Gastrocnemius medialis (tissue), 4 donors: ENCODE measurements at regions of chr1 and their contacts with region 1.

Region 1: DNA sequence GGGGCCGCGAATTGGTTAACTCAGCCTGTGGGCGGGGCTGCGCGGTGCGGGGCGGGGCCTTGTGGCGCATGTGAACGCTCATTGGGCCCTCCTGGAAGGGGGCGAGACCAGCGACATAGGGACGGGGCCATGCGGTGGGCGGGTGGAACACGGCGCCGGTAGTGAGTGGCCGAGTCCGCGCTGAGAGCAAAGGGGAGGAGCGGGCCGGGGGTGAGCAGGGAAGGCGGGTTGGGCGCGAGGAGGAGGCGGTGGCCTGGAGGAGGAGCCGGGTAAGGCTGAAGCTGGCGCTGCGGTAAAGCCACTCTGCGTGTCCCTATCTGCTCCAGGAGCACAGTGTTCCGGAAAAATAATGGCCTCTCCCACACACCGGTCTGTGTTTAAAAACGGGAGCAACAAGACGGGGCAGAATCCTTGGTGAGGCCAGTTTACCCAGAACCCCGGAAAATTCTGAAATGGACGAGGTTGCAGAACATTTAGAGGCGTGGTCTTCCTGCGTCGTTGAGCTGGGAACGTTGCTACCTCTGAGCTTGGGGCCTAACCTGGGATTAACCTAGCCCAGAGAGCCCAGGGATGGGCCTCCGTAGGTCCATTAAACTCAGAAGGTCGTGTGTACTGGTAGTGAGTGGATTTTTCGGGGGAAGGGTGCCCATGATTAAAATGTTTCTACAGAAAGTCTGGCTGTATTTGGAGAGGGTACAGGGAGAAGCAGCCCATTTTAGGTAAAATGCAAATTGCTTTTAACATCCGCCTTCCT is 533 bp upstream of the CTNNBIP1 start:
- DNase-seq: peak; percentile 99 to 100
- ATAC-seq: peak; percentile 81 to 87
- H3K4me3 ChIP-seq: peak overlapping the region; percentile 59 to 79 (median 72)
- H3K27ac ChIP-seq: peak overlapping the region; percentile 92 to 99 (median 98)
- H3K4me1 ChIP-seq: peaks cover 27 to 29% of the 10 kb centered on the region in 2 donors
- H3K27me3 ChIP-seq: no peaks in the 10 kb centered on the region
- CTCF ChIP-seq: no peak
- POLR2A ChIP-seq: peak; percentile 74 to 90

Region 2: DNA sequence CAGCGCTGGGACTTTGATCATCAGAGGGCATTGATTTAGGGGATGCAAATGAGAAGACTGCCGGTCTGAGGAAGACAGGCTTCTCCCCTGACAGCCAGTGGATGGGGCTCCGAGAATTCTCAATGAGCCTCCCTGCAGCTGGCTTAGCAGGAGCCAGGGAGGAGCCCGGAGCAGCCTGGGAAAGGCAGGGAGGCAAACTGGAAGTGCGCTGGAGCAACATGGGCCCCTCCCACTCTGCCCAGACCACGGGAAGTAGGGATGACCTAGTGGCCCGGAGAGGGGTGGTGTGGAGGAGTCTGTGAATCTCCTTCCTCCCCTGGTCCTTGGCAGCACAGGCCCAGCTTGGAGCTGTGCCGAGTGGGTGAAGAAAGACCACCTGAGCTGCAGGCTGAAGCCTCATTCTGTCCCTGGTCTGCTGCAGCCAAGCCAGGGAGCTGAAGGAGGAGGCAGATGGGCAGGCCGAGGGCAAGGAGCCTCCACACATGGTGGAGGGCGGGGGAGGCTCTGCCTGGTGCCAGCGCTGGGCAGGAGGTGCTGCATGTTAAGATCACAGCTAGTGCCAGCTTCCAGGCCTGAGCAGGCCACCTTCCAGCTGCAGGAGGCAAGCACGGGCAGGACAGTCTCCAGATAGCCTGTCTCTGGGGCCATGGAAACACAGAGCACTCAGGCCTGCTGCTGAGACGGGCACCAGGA is 74.7 kb before region 1 on chr1:
- in situ Hi-C with region 1: no loop called
- intact Hi-C with region 1: no loop called
- DNase-seq: peak in 1 of 2 donors; percentile 37
- ATAC-seq: peak; percentile 30 to 58
- H3K4me3 ChIP-seq: no peak overlapping the region
- H3K27ac ChIP-seq: no peak overlapping the region
- H3K4me1 ChIP-seq: peaks cover 0 to 16% of the 10 kb centered on the region in 2 donors
- H3K27me3 ChIP-seq: no peaks in the 10 kb centered on the region
- CTCF ChIP-seq: no peak
- POLR2A ChIP-seq: no peak

Region 3: GRCh38 chr1:9942939-9943788 is 32.6 kb after region 1 on chr1 and contains the starts of genes LZIC and NMNAT1:
- in situ Hi-C with region 1: no loop called
- intact Hi-C with region 1: loop called (anchors 1 kb)
- DNase-seq: peak; percentile 89 to 93
- ATAC-seq: peak; percentile 80 to 90
- H3K4me3 ChIP-seq: peak within 1 kb of the TSS; percentile 60 to 89 (median 82)
- H3K27ac ChIP-seq: peak within 1 kb of the TSS; percentile 93 to 95 (median 94)
- H3K4me1 ChIP-seq: peaks cover 33 to 35% of the 10 kb centered on the region in 2 donors
- H3K27me3 ChIP-seq: no peaks in the 10 kb centered on the region
- CTCF ChIP-seq: peak in 1 of 5 experiments; percentile 24
- POLR2A ChIP-seq: peak; percentile 88 to 95
- total RNA-seq, gene LZIC: 9.4 to 21.7 (median 19.4) TPM
- total RNA-seq, gene NMNAT1: 5.6 to 12.4 (median 8.8) TPM

Region 4: DNA sequence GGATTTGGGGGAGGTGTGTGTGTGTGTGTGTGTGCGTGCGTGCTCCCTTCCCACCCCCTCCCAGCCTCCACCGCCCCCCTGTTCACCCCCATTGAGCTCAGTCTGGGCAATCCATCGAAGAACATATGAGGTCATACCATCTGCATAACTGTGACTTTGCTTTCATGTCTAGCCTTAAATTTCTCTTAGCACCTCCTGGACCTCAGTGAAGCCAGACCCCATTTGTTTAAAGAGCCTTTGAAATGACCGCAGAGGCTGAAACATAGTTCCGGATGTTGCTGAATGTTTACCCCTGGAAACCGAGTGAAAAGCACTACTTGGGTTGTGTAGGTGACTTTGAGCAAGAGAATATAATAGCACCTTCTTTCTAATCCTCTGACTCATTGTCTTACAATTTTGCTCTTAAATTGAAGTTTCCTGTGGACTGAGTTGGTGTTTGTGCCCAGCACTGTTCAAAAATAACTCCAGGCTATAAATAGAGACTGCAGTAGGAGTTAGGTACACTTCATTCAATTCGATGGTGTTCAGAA is 197.6 kb after region 1 on chr1:
- in situ Hi-C with region 1: no loop called
- intact Hi-C with region 1: no loop called
- DNase-seq: no peak
- ATAC-seq: peak; percentile 74 to 79
- H3K4me3 ChIP-seq: peak overlapping the region in 2 of 4 donors; percentile 8 to 29
- H3K27ac ChIP-seq: peak overlapping the region; percentile 79 to 90 (median 87)
- H3K4me1 ChIP-seq: peaks cover 28 to 36% of the 10 kb centered on the region in 2 donors
- H3K27me3 ChIP-seq: no peaks in the 10 kb centered on the region
- CTCF ChIP-seq: no peak
- POLR2A ChIP-seq: no peak

Region 5: DNA sequence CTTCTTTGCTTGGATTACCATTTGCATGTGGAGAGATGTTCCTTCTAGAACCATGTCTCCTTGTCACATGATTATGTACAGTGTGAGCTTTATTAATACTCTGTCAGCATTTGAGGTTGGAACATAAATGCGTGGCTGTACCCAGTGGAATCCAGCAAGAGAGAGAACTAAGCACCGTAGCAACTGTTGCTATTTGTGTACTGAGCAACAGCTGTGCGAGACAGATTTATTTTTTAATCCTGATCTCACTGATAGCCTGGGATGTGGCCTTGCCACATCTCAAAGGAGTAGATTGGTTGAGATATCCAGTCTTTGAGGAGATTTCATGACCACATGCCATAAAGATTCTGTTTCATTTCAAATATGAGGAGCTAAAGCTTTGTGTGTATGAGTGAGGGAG is 343.2 kb after region 1 on chr1:
- in situ Hi-C with region 1: no loop called
- intact Hi-C with region 1: loop called (anchors 2 kb)
- DNase-seq: peak; percentile 73 to 81
- ATAC-seq: peak; percentile 93 to 94
- H3K4me3 ChIP-seq: no peak overlapping the region
- H3K27ac ChIP-seq: peak overlapping the region; percentile 89 to 93 (median 92)
- H3K4me1 ChIP-seq: peaks cover 71 to 76% of the 10 kb centered on the region in 2 donors
- H3K27me3 ChIP-seq: no peaks in the 10 kb centered on the region
- CTCF ChIP-seq: no peak
- POLR2A ChIP-seq: peak in 1 of 2 donors; percentile 18

Region 6: DNA sequence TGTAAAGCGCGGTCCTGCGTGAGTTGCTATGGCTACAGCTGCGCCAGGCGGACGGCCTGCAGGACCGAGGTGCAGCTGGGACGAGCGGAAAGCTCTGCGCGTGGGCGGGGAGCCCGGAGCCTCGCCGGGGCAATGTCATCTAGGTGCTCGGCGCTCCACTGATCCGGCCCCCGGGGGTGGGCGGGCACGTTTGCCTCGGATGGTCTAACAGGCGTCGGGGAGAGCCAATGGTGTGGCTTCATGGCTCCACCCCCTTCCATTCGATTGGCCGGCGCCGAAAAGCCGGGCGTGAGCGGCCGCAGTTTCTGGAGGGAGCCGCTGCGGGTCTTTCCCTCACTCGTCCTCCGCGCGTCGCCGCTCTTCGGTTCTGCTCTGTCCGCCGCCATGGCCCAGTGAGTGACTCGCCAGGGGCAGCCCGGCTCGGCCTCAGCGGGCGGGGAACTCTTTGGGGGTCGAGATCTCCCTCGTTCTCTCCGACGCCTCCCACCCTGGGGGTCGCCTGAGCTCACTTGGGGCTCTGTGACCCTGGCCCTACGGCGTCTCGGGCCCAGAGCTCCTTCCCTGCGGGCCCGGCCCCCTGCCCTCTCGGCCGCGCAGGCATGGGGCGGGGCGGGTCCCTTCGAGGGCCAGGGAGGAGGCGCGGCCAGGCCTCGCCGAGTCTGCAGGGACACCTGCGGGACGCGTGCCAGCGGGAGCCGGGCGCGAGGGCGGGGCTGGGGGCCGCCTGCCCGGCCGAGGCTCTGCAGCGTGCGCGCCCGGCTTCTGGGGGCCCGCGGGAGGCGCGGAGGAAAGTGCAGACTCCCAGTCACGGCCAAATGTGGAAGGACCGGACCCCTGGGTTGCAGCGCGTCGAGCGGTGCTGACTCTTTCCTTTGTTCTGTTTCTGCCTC is 488.4 kb after region 1 on chr1 and contains the start of gene PGD:
- in situ Hi-C with region 1: no loop called
- intact Hi-C with region 1: loop called (anchors 1 kb)
- DNase-seq: peak; percentile 96 to 98
- ATAC-seq: peak; percentile 90 to 93
- H3K4me3 ChIP-seq: peak within 1 kb of the TSS; percentile 71 to 99 (median 87)
- H3K27ac ChIP-seq: peak within 1 kb of the TSS; percentile 82 to 93 (median 92)
- H3K4me1 ChIP-seq: peaks cover 0 to 21% of the 10 kb centered on the region in 2 donors
- H3K27me3 ChIP-seq: no peaks in the 10 kb centered on the region
- CTCF ChIP-seq: peak in 1 of 5 experiments; percentile 15
- POLR2A ChIP-seq: peak; percentile 67 to 81
- total RNA-seq, gene PGD: 23.8 to 48.7 (median 39.3) TPM